HepG2 (cell line): ENCODE measurements at regions of chr17 and their contacts with region 1.

Region 1: DNA sequence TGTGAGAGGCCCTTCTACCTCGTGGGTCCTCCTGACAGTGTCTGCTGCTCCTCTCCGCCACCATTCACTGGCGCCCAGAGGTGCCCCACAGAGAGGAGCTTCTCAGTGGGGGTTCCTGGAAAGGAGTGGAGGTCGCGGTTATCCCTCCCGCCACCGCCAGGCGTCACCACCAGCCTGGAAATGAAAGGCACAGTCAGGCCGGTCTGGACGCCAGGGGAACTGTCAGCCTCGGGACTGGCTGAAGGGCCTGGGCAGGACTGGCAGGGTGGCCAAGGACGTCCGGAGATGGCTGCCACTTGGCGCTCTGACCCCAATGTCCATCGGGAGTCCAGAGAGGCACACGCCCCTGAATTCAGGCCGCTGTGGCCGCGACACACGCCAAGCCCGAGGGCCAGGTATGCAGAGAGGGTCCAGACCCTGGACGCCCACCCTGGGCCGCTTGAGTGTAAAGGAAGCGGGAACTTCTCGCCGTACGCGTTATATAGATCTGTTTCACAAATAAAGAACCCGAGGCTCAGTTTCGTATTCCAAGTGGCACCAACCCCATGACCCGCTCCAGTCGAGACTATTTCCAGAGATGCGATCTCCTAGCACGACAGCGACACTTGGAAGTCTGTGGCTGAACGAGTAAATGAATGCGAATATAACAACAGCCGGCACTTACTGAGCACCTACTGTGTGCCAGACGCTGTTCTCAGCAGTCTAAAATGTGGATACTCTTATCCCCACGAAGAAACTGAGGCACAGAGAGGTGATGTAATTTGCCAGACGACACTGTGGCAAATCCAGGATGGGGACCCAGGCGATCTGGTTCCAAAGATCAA is 7.6 kb upstream of the NXPH3 start:
- DNase-seq: peak; percentile 82
- ATAC-seq: peak; percentile 83
- H3K4me3 ChIP-seq: peak overlapping the region; percentile 41 to 76 (median 61)
- H3K27ac ChIP-seq: peak overlapping the region; percentile 3
- H3K4me1 ChIP-seq: peaks cover 45% of the 10 kb centered on the region
- H3K27me3 ChIP-seq: peaks cover 0 to 28% of the 10 kb centered on the region in 2 experiments; a peak in 3 of 5 replicates
- CTCF ChIP-seq: peak; percentile 100
- EP300 ChIP-seq: no peak
- POLR2A ChIP-seq: no peak
- RAD21 ChIP-seq: peak; percentile 99

Region 2: DNA sequence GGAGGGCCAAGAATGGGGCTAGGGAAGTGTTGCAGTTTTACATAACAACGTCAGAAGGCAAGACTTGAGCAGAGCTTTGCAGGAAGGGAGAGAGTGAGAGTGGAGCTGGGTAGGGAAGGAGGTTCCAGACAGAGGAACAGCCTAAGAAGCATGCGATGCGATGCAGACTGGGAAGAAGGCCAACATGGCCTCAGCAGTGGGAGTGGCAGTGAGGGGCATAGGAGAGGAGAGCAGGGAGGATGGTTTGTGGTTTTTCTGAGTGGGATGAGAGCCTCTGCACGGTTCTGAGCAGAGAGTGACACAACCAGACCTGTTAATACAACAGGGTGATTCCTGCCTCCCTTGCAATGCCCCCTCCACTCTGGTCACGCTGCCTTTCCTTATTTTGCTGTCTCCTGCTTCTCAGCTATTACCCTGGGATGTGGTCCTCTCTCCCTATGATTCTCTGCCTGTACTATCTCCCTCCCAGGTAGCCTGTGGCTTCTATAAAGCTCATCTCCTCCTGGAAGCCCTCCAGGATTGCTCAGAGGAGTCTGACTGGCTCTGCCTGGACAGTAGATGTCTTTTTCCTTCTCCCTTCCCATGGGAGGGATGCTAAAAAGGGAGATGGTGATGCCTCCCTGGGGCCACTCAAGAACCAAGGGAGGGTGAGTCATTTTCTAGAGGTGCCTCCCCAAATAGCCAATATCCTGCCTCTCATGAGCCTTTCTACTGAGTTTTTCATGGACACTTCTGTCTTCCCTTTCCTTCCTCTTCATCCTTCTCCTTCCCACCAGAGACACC is 111.7 kb before region 1 on chr17:
- CTCF ChIA-PET with region 1: no interaction called
- POLR2A ChIA-PET with region 1: no interaction called
- in situ Hi-C with region 1: no loop called
- intact Hi-C with region 1: no loop called
- DNase-seq: no peak
- ATAC-seq: no peak
- H3K4me3 ChIP-seq: no peak overlapping the region
- H3K27ac ChIP-seq: no peak overlapping the region
- H3K4me1 ChIP-seq: peaks cover 50% of the 10 kb centered on the region
- H3K27me3 ChIP-seq: peaks cover 21 to 58% of the 10 kb centered on the region in 2 experiments
- CTCF ChIP-seq: no peak
- EP300 ChIP-seq: no peak
- POLR2A ChIP-seq: no peak
- RAD21 ChIP-seq: no peak

Region 3: GRCh38 chr17:49556223-49556971 is 11.7 kb before region 1 on chr17:
- CTCF ChIA-PET with region 1: interaction called, 18 read pairs
- POLR2A ChIA-PET with region 1: interaction called, 4 read pairs
- in situ Hi-C with region 1: no loop called
- intact Hi-C with region 1: no loop called
- DNase-seq: peak; percentile 65
- ATAC-seq: peak; percentile 92
- H3K4me3 ChIP-seq: peak overlapping the region; percentile 13 to 65 (median 21); a peak in 5 of 6 replicates
- H3K27ac ChIP-seq: no peak overlapping the region
- H3K4me1 ChIP-seq: peaks cover 45% of the 10 kb centered on the region
- H3K27me3 ChIP-seq: peaks cover 14 to 31% of the 10 kb centered on the region in 2 experiments
- CTCF ChIP-seq: peak; percentile 100
- EP300 ChIP-seq: no peak
- POLR2A ChIP-seq: no peak
- RAD21 ChIP-seq: peak; percentile 98

Region 4: DNA sequence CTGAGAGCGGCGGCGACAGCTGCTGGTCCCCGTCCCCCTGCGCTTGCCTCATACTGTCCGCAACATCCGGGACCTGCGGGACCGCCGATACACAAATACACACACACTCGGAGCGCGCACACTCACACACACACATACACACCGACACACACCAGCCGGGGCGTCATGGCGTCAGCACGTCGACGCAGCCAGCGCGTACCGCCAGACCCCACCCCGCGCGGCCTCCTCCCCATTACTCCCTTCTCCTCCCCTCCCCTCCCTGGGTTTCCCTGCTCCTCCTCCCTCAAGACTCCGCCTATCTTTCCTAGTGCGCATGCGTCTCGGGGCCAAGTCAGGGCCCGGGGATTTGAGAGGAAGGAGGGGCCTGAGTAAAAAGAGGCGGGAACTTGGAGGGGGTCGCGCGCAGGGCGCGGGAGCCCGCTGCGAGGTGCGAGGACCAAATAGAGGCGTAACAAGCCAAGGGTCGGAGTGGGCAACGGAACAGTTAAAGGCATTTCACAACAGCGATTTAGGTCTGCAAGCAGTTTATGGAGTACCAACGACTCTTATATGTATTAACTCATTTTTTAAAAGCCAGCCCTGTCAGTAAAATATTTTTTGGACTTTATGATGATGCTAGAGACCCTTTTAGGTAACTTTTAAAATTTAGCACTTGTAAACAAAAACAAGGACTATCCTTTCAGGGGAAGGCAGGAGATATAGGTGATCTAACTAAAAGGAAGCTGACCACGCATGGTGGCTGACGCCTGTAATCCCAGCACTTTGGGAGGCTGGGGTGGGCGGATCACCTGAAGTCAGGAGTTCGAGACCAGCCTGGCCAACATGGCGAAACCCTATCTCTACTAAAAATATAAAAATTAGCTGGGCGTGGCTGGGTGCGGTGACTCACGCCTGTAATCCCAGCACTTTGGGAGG is 110.1 kb after region 1 on chr17 and contains the start of gene SPOP:
- CTCF ChIA-PET with region 1: no interaction called
- POLR2A ChIA-PET with region 1: interaction called, 11 read pairs
- in situ Hi-C with region 1: no loop called
- intact Hi-C with region 1: no loop called
- DNase-seq: peak; percentile 98
- ATAC-seq: peak; percentile 88
- H3K4me3 ChIP-seq: peak within 1 kb of the TSS; percentile 68 to 77 (median 74)
- H3K27ac ChIP-seq: peak within 1 kb of the TSS; percentile 73
- H3K4me1 ChIP-seq: peaks cover 49% of the 10 kb centered on the region
- H3K27me3 ChIP-seq: no peaks in the 10 kb centered on the region; a peak in 1 of 5 replicates
- CTCF ChIP-seq: peak; percentile 19; the same call in 1 of the 2 replicates
- EP300 ChIP-seq: no peak
- POLR2A ChIP-seq: peak; percentile 56 to 81
- RAD21 ChIP-seq: 0 out of 2 replicates have a peak, but pooled peaks have one; percentile 19
- total RNA-seq, gene SPOP: 60.8 and 79.4 TPM in 2 replicates

Region 5: DNA sequence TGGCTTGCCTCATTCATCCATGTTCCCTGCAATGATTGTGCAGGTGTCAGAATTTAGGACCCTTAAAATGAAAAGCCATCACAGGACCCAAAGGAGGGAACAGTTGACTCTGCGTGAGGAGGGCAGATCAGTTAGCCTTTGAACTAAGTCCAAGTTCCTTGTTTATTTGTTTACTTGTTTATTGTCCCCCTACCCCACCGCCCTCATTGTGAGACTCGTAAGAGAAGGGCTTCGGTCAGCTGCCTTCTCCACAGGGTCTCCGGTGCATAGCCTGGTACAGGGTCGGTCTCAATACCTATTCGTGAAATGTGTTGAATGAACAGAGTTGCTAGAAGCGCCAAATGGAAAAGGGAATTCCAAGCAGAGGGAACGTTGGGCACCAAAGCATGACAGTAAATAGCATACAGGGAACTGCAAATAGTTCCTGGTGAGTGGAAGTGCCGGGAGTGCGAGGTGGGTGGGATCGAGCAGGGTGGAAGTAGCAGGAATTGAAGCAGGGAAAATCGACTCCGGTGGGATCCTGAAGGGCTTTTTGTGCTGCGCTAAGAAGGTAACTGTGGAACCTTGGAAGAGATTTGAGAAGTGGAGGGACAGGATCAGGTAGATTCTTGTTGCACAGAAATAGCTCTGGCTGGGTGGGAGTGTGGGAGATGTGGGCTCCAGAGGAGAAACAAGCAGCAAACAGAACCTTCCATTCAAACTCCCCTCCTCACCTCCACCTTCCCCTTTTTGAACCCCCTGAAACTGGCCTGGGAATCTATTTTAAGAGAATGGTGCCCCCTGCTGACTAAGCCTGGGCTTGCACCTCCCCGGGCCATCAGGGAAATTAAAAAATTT is 127.0 kb after region 1 on chr17:
- CTCF ChIA-PET with region 1: interaction called, 210 read pairs
- POLR2A ChIA-PET with region 1: interaction called, 9 read pairs
- in situ Hi-C with region 1: loop called (anchors 5 kb)
- intact Hi-C with region 1: loop called (anchors 1 kb)
- DNase-seq: peak; percentile 30
- ATAC-seq: peak; percentile 39
- H3K4me3 ChIP-seq: peak overlapping the region in 2 of 3 experiments; percentile 13 to 59; a peak in 3 of 6 replicates
- H3K27ac ChIP-seq: no peak overlapping the region
- H3K4me1 ChIP-seq: peaks cover 29% of the 10 kb centered on the region
- H3K27me3 ChIP-seq: peaks cover 0 to 17% of the 10 kb centered on the region in 2 experiments; a peak in 2 of 5 replicates
- CTCF ChIP-seq: peak; percentile 86
- EP300 ChIP-seq: no peak
- POLR2A ChIP-seq: no peak
- RAD21 ChIP-seq: peak; percentile 93

Region 6: GRCh38 chr17:49779739-49780231 is 211.7 kb after region 1 on chr17:
- CTCF ChIA-PET with region 1: interaction called, 12 read pairs
- POLR2A ChIA-PET with region 1: no interaction called
- in situ Hi-C with region 1: no loop called
- intact Hi-C with region 1: loop called (anchors 1 kb)
- DNase-seq: peak; percentile 56
- ATAC-seq: peak; percentile 85
- H3K4me3 ChIP-seq: no peak overlapping the region
- H3K27ac ChIP-seq: no peak overlapping the region
- H3K4me1 ChIP-seq: no peaks in the 10 kb centered on the region; the same call in 1 of the 2 replicates
- H3K27me3 ChIP-seq: peaks cover 2 to 14% of the 10 kb centered on the region in 2 experiments; a peak in 3 of 5 replicates
- CTCF ChIP-seq: peak; percentile 81
- EP300 ChIP-seq: no peak
- POLR2A ChIP-seq: no peak
- RAD21 ChIP-seq: 0 out of 2 replicates have a peak, but pooled peaks have one; percentile 30

Region 7: DNA sequence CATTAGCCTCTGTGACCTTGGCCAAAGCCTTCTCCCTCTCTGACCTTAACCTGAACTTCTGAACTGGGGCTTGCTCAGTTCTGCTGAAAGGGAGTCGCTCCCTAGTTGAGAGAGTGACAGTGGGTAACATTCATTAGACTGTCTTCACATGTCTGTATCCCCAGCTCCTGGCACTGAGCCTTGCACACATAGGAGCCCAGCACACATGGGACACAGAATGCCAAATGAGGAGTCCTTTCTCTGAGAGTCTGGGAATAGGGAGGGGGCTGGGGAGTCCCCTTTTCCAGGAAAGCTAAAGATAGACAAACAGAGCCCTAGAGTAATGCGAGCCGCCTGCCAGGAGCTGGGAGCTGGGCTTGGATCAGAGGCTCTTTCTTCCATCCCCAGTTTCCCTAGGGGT is 277.2 kb after region 1 on chr17:
- CTCF ChIA-PET with region 1: no interaction called
- POLR2A ChIA-PET with region 1: no interaction called
- in situ Hi-C with region 1: loop called (anchors 5 kb)
- intact Hi-C with region 1: loop called (anchors 10 kb)
- DNase-seq: no peak
- ATAC-seq: no peak
- H3K4me3 ChIP-seq: no peak overlapping the region
- H3K27ac ChIP-seq: no peak overlapping the region
- H3K4me1 ChIP-seq: peaks cover 14% of the 10 kb centered on the region
- H3K27me3 ChIP-seq: peaks cover 0 to 6% of the 10 kb centered on the region in 2 experiments; a peak in 3 of 5 replicates
- CTCF ChIP-seq: no peak
- EP300 ChIP-seq: no peak
- POLR2A ChIP-seq: no peak
- RAD21 ChIP-seq: no peak

Region 8: GRCh38 chr17:49997791-49998703 is 430.0 kb after region 1 on chr17:
- CTCF ChIA-PET with region 1: interaction called, 9 read pairs
- POLR2A ChIA-PET with region 1: no interaction called
- in situ Hi-C with region 1: loop called (anchors 5 kb)
- intact Hi-C with region 1: loop called (anchors 5 kb)
- DNase-seq: peak; percentile 92
- ATAC-seq: peak; percentile 88
- H3K4me3 ChIP-seq: peak overlapping the region in 1 of 3 experiments; percentile 38; a peak in 1 of 6 replicates
- H3K27ac ChIP-seq: no peak overlapping the region
- H3K4me1 ChIP-seq: peaks cover 45% of the 10 kb centered on the region
- H3K27me3 ChIP-seq: peaks cover 15 to 67% of the 10 kb centered on the region in 2 experiments
- CTCF ChIP-seq: peak; percentile 98
- EP300 ChIP-seq: no peak
- POLR2A ChIP-seq: no peak
- RAD21 ChIP-seq: peak; percentile 98